T-cell (primary cell): ENCODE measurements at regions of chr6 and their contacts with region 1.

Region 1: GRCh38 chr6:57097596-57097995 is 7.6 kb downstream of the ZNF451 start:
- DNase-seq: no peak
- ATAC-seq: no peak
- H3K4me3 ChIP-seq: no peak overlapping the region
- H3K4me3 Mint-ChIP-seq: no peak overlapping the region
- H3K27ac ChIP-seq: no peak overlapping the region
- H3K27ac Mint-ChIP-seq: no peak overlapping the region
- H3K4me1 ChIP-seq: peaks cover 3 to 5% of the 10 kb centered on the region in 2 experiments
- H3K4me1 Mint-ChIP-seq: peaks cover 45 to 61% (median 49%) of the 10 kb centered on the region in 3 donors
- H3K27me3 ChIP-seq: no peaks in the 10 kb centered on the region
- H3K27me3 Mint-ChIP-seq: no peaks in the 10 kb centered on the region

Region 2: DNA sequence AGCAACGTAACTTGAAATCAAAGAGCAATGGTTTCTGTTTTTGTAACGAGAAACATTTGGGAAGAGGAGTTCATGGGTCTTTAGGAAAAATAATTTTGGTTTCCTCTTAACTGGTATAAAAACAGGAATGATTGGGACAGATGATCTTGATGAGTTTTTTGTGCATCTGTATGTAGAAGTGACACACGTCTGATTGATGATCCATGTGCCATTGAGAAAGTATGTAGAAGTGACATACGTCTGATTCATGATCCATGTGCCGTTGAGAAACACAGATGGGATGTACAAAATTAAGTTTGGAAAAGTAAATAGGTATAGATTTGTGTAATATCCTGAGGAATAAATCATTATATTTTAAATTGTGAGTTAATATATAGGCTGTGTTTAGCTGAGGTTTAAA is 49.0 kb before region 1 on chr6:
- CTCF ChIA-PET with region 1: no interaction called
- POLR2A ChIA-PET with region 1: interaction called in 1 of 2 experiments, 17 read pairs
- DNase-seq: no peak
- ATAC-seq: no peak
- H3K4me3 ChIP-seq: no peak overlapping the region
- H3K4me3 Mint-ChIP-seq: peak overlapping the region; percentile 53 to 71 (median 55)
- H3K27ac ChIP-seq: no peak overlapping the region
- H3K27ac Mint-ChIP-seq: peak overlapping the region; percentile 73 to 83
- H3K4me1 ChIP-seq: peaks cover 4 to 10% of the 10 kb centered on the region in 2 experiments
- H3K4me1 Mint-ChIP-seq: peaks cover 30 to 33% (median 32%) of the 10 kb centered on the region in 3 donors
- H3K27me3 ChIP-seq: no peaks in the 10 kb centered on the region
- H3K27me3 Mint-ChIP-seq: no peaks in the 10 kb centered on the region

Region 3: DNA sequence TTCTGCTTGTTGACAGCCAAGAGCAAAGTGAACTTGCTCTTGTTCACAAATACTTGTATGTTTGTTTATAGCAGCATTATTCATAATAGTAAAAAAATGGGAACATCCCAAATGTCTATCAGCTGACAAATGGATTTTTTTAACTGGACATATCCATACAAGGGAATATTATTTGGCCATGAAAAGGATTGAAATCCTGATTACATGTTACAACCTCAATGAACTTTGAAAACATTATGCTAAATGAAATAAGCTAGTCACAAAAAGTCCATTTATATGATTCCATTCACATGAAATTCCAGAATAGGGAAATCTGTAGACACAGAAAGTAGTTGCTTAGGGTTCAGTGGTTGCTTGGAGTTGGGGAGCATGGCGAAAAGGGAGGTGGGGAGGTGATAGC is 46.1 kb after region 1 on chr6:
- CTCF ChIA-PET with region 1: no interaction called
- POLR2A ChIA-PET with region 1: interaction called in 1 of 2 experiments, 15 read pairs
- DNase-seq: no peak
- ATAC-seq: no peak
- H3K4me3 ChIP-seq: no peak overlapping the region
- H3K4me3 Mint-ChIP-seq: no peak overlapping the region
- H3K27ac ChIP-seq: no peak overlapping the region
- H3K27ac Mint-ChIP-seq: no peak overlapping the region
- H3K4me1 ChIP-seq: no peaks in the 10 kb centered on the region
- H3K4me1 Mint-ChIP-seq: peaks cover 15 to 24% (median 18%) of the 10 kb centered on the region in 3 donors
- H3K27me3 ChIP-seq: no peaks in the 10 kb centered on the region
- H3K27me3 Mint-ChIP-seq: no peaks in the 10 kb centered on the region